Ovary (tissue), 10 donors: ENCODE measurements at regions of chr11 and their contacts with region 1.

Region 1: DNA sequence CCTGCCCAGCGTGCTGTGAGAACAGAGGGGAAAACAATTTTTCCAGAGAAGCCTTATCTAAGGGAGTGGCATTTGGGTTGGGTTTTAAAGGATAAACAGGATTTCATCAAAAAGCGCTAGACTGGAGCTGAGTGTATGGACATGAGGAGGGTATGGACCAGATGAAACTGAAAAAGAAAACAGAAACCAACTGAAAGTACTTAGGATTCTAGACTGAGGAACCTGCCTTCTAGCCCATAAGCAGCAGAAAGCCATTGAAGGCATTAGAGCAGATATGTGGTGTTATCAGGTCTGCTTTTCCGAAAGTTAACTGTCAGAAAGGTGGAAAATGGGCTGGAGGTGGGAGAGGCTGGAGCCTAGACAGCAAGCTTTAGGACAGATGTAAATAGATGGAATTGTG is 340.0 kb upstream of the MPPED2 start:
- DNase-seq: no peak
- H3K4me3 ChIP-seq: no peak overlapping the region
- H3K27ac ChIP-seq: no peak overlapping the region
- H3K4me1 ChIP-seq: no peaks in the 10 kb centered on the region
- H3K27me3 ChIP-seq: no peaks in the 10 kb centered on the region
- CTCF ChIP-seq: no peak
- EP300 ChIP-seq: no peak
- POLR2A ChIP-seq: no peak

Region 2: GRCh38 chr11:30879322-30880005 is 46.7 kb before region 1 on chr11:
- intact Hi-C with region 1: loop called in 1 of 4 experiments (anchors 5 kb)
- DNase-seq: no peak
- H3K4me3 ChIP-seq: no peak overlapping the region
- H3K27ac ChIP-seq: no peak overlapping the region
- H3K4me1 ChIP-seq: peaks cover 2% of the 10 kb centered on the region
- H3K27me3 ChIP-seq: no peaks in the 10 kb centered on the region
- CTCF ChIP-seq: no peak
- EP300 ChIP-seq: no peak
- POLR2A ChIP-seq: no peak